Sciatic nerve (tissue), 2 donors: ENCODE measurements at regions of chr11 and their contacts with region 1.

Region 1: DNA sequence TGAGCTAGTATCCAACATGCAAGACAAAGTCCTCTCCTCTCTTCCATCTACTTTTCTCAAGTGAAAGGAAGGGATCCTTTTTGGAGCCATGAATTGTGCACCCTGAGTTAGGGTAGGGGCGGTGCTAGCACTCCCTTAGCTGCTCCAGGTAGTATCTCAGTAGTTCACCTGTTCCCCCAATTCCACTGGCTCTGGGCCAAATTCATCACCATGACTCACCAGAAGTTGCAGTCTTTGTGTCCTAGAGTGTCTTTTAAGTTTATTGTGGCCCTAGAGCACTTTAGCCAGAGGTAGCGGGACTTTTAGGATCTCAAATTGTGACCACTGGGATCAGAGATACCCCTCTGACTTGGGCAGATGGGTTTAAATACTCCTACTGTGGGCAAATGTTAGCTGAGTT is 398.6 kb upstream of the ANO5 start:
- DNase-seq: no peak
- ATAC-seq: no peak

Region 2: DNA sequence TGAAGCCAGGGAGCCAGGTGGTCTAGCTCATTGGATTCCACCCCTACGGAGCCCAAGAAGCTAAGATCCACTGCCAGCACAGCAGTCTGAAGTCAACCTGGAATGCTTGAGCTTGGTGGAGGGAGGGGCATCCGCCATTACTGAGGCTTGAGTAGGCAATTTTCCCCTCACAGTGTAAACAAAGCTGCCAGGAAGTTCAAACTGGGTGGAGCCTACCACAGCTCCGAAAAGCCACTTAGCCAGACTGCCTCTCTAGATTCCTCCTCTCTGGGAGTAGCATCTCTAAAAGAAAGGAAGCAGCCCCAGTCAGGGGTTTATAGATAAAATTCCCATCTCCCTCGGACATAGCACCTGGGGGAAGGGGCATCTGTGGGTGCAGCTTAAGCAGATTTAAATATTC is 504.6 kb before region 1 on chr11:
- intact Hi-C with region 1: loop called (anchors 10 kb)
- DNase-seq: no peak
- ATAC-seq: no peak

Region 3: GRCh38 chr11:21485006-21485405 is 309.3 kb before region 1 on chr11:
- intact Hi-C with region 1: no loop called
- DNase-seq: no peak
- ATAC-seq: no peak